PC-3 (cell line): ENCODE measurements at regions of chr2 and their contacts with region 1.

Region 1: DNA sequence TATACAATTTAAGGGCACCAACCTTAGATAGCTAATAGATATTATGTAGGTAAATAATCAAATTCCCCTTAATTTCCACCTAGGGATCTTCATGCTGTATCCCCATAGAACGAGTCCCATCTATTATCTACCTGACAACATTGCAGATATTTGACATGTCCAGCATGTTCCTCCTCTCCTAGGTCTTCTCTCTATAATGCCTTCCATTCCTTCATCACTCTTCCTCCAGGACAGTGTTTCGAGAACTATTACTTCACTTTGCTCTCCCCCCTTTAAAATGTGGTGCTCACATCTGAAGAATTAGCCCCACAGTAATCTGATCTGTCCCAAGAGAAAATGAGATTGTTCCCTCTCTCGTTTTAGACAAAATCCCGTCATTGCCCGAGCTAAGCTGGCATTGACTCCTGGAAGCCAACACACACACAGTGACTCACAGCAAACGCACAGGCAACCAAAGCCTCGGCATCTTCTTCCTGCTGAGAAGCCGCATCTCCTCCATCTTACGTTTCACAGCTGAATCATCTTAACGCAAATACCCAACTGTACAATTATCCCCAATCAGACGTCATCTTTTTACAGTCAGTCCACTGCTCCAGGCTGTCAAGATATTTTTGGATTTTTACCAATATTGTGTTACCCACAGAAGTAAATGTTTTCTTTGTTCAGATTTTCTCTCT is 162.9 kb upstream of the AGAP1 start:
- DNase-seq: peak; percentile 97
- ATAC-seq: peak; percentile 92
- H3K4me3 ChIP-seq: peak overlapping the region; percentile 49
- H3K27ac ChIP-seq: peak overlapping the region; percentile 99
- H3K4me1 ChIP-seq: peaks cover 40% of the 10 kb centered on the region
- H3K27me3 ChIP-seq: no peaks in the 10 kb centered on the region
- CTCF ChIP-seq: no peak

Region 2: DNA sequence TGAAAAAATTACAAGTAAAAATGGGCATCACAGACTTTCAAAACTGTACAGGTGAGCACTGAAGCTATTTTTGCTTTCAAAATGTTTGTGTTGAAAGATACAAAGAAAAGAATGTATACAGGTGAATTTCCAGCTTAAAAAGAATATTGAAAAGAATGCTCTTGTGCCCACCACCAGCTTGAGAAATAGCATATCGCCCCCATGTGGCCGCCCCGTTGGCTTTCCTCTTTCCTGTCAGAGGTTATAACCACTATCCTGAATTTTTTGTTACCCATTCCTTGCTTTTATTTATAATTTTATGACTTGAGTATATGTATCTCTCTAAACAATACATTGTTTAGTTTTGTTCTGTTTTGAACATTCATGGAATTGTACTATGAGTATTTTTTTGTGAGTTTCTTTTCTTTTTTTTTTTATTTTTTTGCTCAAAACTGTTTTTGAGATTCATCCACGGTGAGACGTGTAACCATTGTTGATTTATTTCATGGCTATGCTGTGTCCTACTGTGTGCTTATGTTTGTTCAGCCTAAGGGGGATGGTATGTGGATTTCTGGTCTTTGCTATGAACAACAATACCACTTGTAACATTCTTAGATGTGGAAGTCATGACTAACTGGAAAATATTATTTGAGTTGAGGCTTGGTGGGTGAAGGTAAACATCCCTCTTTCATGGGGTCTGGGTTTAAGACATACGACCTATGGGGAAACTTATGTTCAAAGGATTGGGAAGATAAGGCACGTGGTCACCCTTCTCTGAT is 1402.1 kb before region 1 on chr2:
- CTCF ChIA-PET with region 1: no interaction called
- POLR2A ChIA-PET with region 1: interaction called, 13 read pairs
- intact Hi-C with region 1: no loop called
- DNase-seq: peak; percentile 56
- ATAC-seq: no peak
- H3K4me3 ChIP-seq: no peak overlapping the region
- H3K27ac ChIP-seq: no peak overlapping the region
- H3K4me1 ChIP-seq: no peaks in the 10 kb centered on the region
- H3K27me3 ChIP-seq: no peaks in the 10 kb centered on the region
- CTCF ChIP-seq: peak; percentile 84

Region 3: GRCh38 chr2:235149240-235149659 is 181.7 kb before region 1 on chr2:
- CTCF ChIA-PET with region 1: no interaction called
- POLR2A ChIA-PET with region 1: no interaction called
- intact Hi-C with region 1: loop called (anchors 10 kb)
- DNase-seq: no peak
- ATAC-seq: no peak; the same call in 1 of the 2 replicates
- H3K4me3 ChIP-seq: no peak overlapping the region
- H3K27ac ChIP-seq: no peak overlapping the region
- H3K4me1 ChIP-seq: peaks cover 7% of the 10 kb centered on the region; the same call in 1 of the 2 replicates
- H3K27me3 ChIP-seq: no peaks in the 10 kb centered on the region
- CTCF ChIP-seq: no peak

Region 4: DNA sequence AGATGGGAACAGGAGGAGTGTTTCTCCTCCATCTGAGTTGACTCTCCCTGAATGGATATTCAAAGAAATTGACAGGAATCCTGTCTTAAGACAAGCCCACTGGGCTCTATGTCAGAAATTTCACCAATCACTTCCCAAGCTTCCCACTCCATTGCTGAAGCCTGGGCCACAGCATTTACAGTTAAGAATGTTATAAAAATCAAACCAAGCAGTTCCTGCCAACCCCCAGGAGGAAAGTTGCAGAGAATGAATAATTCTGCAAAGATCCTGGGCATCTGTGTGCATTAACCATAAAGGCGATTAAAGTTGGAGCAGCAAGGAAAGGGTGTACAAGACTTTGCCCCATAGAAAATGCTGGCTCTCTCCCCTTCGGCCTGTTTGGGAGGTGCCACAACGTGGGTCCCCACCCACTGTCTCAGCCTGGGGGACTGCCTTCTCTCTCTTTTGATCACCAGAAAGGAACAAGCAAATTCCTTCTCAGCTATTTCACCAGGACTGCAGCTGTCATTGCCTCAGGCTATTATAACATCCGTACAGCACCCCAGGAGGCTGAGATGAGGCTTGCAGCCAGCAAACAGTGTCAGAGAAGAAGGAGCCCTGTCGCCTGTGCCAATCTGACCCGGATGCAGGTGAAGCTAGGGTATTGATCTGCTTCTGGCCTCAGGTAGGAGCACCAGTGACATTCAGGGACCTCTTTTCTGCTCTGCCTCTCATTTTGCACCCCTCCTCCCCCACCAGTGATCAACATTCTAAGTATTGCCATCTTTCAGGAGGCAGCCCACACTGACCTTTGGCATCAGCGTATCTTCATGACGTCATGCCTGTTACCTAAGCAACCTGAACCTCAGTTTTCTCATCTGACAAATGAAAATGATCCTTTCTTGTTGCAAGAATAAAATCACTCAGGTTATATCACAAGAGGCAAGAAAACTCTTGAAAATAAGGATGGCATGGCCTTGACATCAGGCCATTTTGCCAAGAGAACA is 160.1 kb before region 1 on chr2:
- CTCF ChIA-PET with region 1: no interaction called
- POLR2A ChIA-PET with region 1: no interaction called
- intact Hi-C with region 1: loop called (anchors 1 kb)
- DNase-seq: peak; percentile 87
- ATAC-seq: peak; percentile 71
- H3K4me3 ChIP-seq: peak overlapping the region; percentile 34; the same call in 1 of the 2 replicates
- H3K27ac ChIP-seq: peak overlapping the region; percentile 98
- H3K4me1 ChIP-seq: peaks cover 36% of the 10 kb centered on the region
- H3K27me3 ChIP-seq: no peaks in the 10 kb centered on the region
- CTCF ChIP-seq: peak; percentile 43

Region 5: GRCh38 chr2:235255693-235256092 is 75.2 kb before region 1 on chr2:
- CTCF ChIA-PET with region 1: no interaction called
- POLR2A ChIA-PET with region 1: no interaction called
- intact Hi-C with region 1: no loop called
- DNase-seq: no peak
- ATAC-seq: no peak
- H3K4me3 ChIP-seq: no peak overlapping the region
- H3K27ac ChIP-seq: no peak overlapping the region
- H3K4me1 ChIP-seq: no peaks in the 10 kb centered on the region
- H3K27me3 ChIP-seq: no peaks in the 10 kb centered on the region
- CTCF ChIP-seq: no peak

Region 6: DNA sequence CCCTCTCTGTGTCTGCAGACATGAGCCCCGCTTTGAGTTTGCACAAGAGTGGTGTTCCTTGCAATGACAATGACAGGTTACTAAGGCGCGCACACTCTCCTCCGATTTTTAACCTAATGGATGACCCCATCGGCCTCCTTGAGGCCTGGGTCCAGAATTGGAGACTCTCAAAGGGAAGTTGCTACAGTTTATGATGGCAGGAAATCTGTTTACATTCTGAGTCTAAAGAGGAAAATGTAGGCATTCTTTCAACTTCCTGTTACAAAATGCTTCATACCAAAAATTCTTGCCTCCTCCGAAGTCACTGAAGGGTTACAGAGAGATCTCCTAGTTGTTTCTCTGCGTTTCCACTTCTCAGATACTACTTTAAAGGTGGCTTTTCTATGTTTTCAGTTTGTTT is 62.4 kb before region 1 on chr2:
- CTCF ChIA-PET with region 1: no interaction called
- POLR2A ChIA-PET with region 1: no interaction called
- intact Hi-C with region 1: loop called (anchors 2 kb)
- DNase-seq: peak; percentile 39
- ATAC-seq: no peak
- H3K4me3 ChIP-seq: no peak overlapping the region
- H3K27ac ChIP-seq: no peak overlapping the region
- H3K4me1 ChIP-seq: peaks cover 18% of the 10 kb centered on the region
- H3K27me3 ChIP-seq: no peaks in the 10 kb centered on the region
- CTCF ChIP-seq: no peak